Heart left ventricle (tissue), 16 donors: ENCODE measurements at regions of chr6 and their contacts with region 1.

Region 1: GRCh38 chr6:105601541-105602236 is 198.8 kb upstream of the PREP start:
- DNase-seq: peak; percentile 53 to 91 (median 82)
- ATAC-seq: peak; percentile 98 to 99 (median 98)
- H3K4me3 ChIP-seq: peak overlapping the region in 9 of 12 donors; percentile 2 to 26 (median 15)
- H3K27ac ChIP-seq: peak overlapping the region; percentile 31 to 91 (median 78)
- H3K4me1 ChIP-seq: peaks cover 0 to 42% (median 28%) of the 10 kb centered on the region in 12 donors
- H3K27me3 ChIP-seq: no peaks in the 10 kb centered on the region
- CTCF ChIP-seq: no peak
- POLR2A ChIP-seq: peak in 1 of 2 donors; percentile 53

Region 2: DNA sequence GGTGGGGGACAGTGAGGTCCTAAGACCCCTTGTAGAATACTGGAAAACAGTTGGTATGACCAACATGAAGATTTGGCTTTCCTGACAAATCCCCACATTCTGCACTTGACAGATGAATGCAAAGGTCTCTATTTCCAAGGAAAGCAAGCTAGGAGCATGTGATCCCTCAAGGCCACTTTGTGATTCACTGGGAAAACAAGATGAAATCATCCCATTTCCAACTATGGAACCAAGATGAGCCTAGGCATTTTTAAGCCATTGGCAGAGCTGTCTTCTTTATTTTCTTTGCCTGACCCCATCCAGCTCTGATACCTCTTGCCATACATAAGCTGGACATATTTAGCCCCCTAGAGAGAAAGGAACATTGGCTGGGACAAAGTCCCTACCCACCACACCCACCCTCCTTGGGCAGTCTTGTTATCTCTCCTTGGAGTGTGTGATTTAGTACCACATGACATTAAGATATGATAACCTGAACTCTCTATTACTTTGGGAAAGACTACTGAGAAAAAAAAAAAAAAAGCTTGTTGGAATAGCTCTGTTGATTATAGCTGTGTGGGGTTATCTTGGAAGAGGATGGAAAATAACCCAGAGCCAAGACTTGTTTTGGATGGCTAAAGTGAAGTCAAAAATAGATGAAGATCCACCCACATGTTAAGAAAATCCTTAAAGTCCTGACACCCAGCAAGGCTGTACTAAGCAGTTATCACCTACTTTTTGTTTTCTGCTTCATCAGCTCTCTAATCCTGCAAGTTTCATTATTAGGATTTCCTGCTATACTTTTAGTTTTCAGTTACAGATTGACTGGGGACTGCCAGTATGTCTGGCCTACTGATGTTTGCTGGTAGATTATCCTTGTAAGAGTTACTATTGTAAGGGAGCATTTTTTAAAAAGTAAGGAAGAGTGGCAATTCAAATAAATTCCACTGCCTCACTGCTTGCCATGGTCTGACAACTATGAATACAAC is 108.7 kb before region 1 on chr6:
- intact Hi-C with region 1: loop called in 3 of 10 experiments (anchors 5 to 10 kb)
- DNase-seq: no peak
- ATAC-seq: peak in 3 of 4 donors; percentile 33 to 49 (median 45)
- H3K4me3 ChIP-seq: no peak overlapping the region
- H3K27ac ChIP-seq: peak overlapping the region in 10 of 12 donors; percentile 4 to 72 (median 48)
- H3K4me1 ChIP-seq: peaks cover 0 to 52% (median 35%) of the 10 kb centered on the region in 12 donors
- H3K27me3 ChIP-seq: no peaks in the 10 kb centered on the region
- CTCF ChIP-seq: no peak
- POLR2A ChIP-seq: no peak

Region 3: DNA sequence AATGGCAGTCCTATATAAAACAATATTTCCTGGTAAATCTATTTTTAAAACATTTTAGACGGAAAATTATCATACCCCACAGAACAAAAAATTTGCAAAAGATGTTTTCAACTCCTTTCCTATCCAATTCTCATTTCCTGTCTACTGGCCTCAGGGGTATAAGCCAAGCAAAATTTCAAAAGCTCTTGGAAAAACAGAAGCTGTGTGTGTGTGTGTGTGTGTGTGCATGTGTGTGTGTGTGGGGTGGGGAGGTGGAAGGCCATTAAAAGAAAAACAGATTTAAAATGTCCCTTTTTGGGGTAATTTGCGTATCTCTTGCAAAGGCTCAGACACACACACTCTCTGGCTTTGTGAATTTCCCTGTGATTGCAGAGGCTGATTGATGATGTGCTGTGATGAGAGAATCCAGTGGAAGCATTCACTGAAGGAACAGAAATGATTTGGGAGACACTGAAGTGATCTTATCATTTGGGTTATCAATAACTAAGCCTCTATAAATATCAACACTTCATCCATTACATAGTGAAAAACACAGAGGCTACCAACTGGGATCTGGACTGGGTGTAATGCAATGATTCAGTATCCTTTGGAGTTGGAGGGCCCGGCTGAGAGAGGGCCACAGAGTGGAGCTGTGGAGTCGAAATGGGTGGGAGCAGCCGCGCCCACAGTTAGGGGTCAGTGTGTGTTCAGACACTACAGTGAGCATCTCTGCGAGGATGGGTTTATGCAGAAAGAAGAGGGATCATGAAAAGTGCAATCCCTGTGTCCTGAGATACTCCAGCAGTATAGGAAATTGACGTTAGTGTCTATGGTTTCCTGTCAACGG is 92.0 kb before region 1 on chr6:
- intact Hi-C with region 1: loop called in 1 of 10 experiments (anchors 10 kb)
- DNase-seq: peak in 4 of 5 donors; percentile 36 to 68 (median 52)
- ATAC-seq: peak; percentile 65 to 77 (median 76)
- H3K4me3 ChIP-seq: no peak overlapping the region
- H3K27ac ChIP-seq: peak overlapping the region in 4 of 12 donors; percentile 16 to 64 (median 46)
- H3K4me1 ChIP-seq: peaks cover 0 to 30% (median 14%) of the 10 kb centered on the region in 12 donors
- H3K27me3 ChIP-seq: no peaks in the 10 kb centered on the region
- CTCF ChIP-seq: peak in 9 of 12 donors; percentile 24 to 64 (median 38)
- POLR2A ChIP-seq: no peak

Region 4: DNA sequence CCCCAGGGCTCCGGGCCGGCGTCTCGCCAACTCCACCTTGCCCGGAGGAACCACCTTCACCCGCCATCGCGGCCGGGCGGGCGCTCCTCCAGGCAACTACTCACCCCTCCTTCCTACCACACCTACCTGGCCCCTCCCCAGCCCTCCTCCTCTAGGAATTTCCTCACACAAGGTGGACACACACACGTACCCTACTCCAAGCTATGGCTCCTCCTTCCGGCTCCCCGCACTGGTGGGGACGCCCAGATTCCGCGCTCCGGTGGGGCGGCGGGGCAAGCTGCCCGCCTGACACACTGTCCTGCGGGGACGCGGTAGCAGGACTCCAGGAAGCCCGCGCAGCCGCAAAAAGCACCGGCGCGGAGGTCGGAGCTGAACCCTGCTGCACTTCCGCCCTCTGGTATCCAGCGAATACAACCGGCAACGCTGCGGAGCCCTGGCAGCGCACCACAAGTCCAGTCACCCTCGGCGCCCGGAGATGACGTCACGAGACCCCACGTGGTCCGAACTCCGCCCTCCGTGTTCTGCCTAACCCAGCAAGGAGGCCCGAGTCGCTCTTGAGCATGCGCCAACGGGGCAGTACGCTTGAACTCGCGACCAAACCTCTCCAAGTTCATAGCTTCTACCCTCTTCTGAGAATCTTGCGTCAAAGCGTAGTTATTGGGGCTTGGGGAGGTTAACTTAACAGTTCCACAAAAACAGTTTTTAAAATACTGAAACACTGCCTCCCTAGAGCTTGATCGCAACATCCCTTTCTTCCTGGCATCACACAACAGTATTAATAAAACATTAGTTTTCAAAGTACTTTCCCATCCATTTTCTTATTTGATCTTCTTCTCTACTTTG is 723.9 kb after region 1 on chr6 and contains the start of gene ATG5:
- intact Hi-C with region 1: loop called in 1 of 10 experiments (anchors 10 kb)
- DNase-seq: peak; percentile 99 to 100 (median 99)
- ATAC-seq: peak; percentile 97 to 99 (median 98)
- H3K4me3 ChIP-seq: peak within 1 kb of the TSS; percentile 65 to 97 (median 80)
- H3K27ac ChIP-seq: peak within 1 kb of the TSS; percentile 82 to 95 (median 86)
- H3K4me1 ChIP-seq: peaks cover 3 to 19% (median 13%) of the 10 kb centered on the region in 12 donors
- H3K27me3 ChIP-seq: peaks cover 0 to 7% (median 0%) of the 10 kb centered on the region in 9 donors
- CTCF ChIP-seq: no peak
- POLR2A ChIP-seq: peak; percentile 15 to 79
- total RNA-seq, gene ATG5: 12.6 to 23.9 (median 14.3) TPM